Posterior cingulate gyrus (tissue), 11 donors: ENCODE measurements at regions of chr2 and their contacts with region 1.

Region 1: DNA sequence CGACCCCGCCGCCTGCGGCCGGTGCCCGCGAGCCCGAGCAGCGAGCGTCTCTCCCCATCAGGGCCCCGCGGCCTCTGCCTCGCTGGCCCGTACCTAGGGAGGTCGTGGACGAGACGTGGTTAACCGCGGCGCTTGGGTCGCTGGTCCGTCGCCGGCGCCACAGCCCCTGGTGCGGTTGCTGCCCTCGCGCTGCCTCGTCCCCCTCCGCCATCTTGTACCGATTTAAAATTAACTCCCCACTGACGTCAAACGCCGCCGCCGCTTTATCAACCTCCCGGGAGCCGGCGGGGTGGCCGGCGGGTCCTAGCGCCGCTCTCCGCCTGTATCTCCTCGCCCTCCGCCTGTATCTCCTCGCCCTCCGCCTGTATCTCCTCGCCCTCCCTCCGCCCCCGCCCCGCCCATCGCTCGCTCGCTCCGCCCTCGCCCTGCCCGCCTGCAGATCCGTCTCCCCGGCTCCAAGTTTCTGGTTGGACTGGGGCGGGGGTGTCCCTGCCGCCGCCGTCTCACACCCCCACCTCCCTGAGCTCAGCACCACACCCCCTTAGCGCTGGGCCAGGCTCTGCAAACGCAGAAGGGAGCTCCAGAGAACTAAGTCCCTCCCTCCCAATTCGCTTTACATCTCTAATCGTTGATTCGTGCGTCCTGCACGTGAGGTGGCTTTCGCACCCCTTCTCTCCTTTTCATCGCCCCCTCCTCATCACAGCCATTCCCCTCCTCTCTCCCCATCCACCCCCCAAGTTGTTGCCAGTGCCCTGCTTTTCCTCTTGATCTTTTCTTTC is at the start of gene ATL2:
- DNase-seq: peak; percentile 89 to 99 (median 94)

Region 2: GRCh38 chr2:38442643-38443541 is 65.7 kb after region 1 on chr2:
- intact Hi-C with region 1: loop called (anchors 10 kb)
- DNase-seq: peak in 7 of 10 donors; percentile 39 to 88 (median 48)

Region 3: GRCh38 chr2:38672445-38673391 is 295.5 kb after region 1 on chr2:
- intact Hi-C with region 1: no loop called
- DNase-seq: no peak